Heart right ventricle (tissue), 16 donors: ENCODE measurements at regions of chr3 and their contacts with region 1.

Region 1: DNA sequence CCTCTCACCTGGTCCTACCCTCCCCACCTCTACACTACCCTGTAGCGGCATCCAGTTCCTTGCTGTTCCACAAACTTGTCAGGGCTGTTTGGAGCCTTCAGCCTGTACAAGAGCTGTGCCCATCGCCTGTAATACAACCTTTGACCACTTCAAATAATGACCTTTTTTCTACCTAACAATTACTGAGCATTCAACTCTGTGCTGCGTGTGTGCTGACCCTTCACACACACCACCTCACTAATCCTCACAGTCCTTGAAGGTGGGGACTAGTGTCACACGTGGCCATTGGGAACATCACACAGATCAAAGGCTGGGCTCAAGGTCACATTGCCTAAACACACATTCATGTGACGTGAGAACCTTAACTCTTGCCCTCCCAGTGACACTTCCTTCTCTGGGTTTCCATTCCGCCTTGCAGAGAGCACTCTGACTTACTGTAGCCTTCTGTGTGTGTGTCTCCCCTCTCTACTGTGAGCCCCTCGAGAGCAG is 3.1 kb downstream of the C3orf20 start:
- DNase-seq: no peak
- ATAC-seq: no peak
- H3K4me3 ChIP-seq: no peak overlapping the region
- H3K27ac ChIP-seq: no peak overlapping the region
- H3K4me1 ChIP-seq: no peaks in the 10 kb centered on the region
- H3K27me3 ChIP-seq: no peaks in the 10 kb centered on the region
- CTCF ChIP-seq: no peak

Region 2: DNA sequence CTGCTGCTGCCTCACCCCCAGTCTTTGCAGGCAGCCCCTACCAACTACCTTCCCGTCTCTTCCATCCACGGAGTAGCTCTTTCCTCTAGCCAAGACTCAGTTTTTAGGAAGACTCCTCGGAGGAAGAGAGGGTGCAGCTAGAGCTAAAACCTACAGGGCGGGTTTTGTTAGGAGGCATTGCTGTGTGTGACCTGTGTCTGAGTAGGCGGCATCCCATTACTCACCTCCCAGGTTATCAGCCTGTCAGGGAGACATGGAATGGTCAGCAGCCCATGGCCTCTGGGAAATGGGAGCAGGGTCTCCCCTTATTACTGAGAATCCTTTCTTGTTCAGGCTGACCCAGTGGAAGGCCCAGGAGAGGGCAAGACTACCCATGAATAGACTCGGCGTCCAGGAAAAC is 97.0 kb after region 1 on chr3:
- intact Hi-C with region 1: loop called in 9 of 10 experiments (anchors 2 to 5 kb)
- DNase-seq: no peak
- ATAC-seq: no peak
- H3K4me3 ChIP-seq: no peak overlapping the region
- H3K27ac ChIP-seq: no peak overlapping the region
- H3K4me1 ChIP-seq: no peaks in the 10 kb centered on the region
- H3K27me3 ChIP-seq: no peaks in the 10 kb centered on the region
- CTCF ChIP-seq: no peak

Region 3: GRCh38 chr3:14780927-14781507 is 103.0 kb after region 1 on chr3:
- intact Hi-C with region 1: loop called (anchors 2 to 5 kb)
- DNase-seq: peak; percentile 46 to 61
- ATAC-seq: peak; percentile 65 to 93 (median 88)
- H3K4me3 ChIP-seq: no peak overlapping the region
- H3K27ac ChIP-seq: no peak overlapping the region
- H3K4me1 ChIP-seq: peaks cover 0 to 18% (median 0%) of the 10 kb centered on the region in 9 donors
- H3K27me3 ChIP-seq: peaks cover 0 to 13% (median 0%) of the 10 kb centered on the region in 7 donors
- CTCF ChIP-seq: peak; percentile 39 to 82 (median 70)

Region 4: GRCh38 chr3:14791343-14791945 is 113.4 kb after region 1 on chr3:
- intact Hi-C with region 1: loop called in 1 of 10 experiments (anchors 5 kb)
- DNase-seq: peak; percentile 66 to 79
- ATAC-seq: peak; percentile 54 to 72 (median 62)
- H3K4me3 ChIP-seq: no peak overlapping the region
- H3K27ac ChIP-seq: peak overlapping the region in 2 of 10 donors; percentile 56 to 65
- H3K4me1 ChIP-seq: peaks cover 14 to 50% (median 35%) of the 10 kb centered on the region in 9 donors
- H3K27me3 ChIP-seq: peaks cover 0 to 26% (median 0%) of the 10 kb centered on the region in 7 donors
- CTCF ChIP-seq: peak; percentile 54 to 83 (median 77)

Region 5: GRCh38 chr3:14915636-14916222 is 237.7 kb after region 1 on chr3:
- intact Hi-C with region 1: loop called in 9 of 10 experiments (anchors 2 to 5 kb)
- DNase-seq: no peak
- ATAC-seq: peak in 3 of 8 donors; percentile 10 to 34 (median 17)
- H3K4me3 ChIP-seq: no peak overlapping the region
- H3K27ac ChIP-seq: no peak overlapping the region
- H3K4me1 ChIP-seq: peaks cover 0 to 10% (median 2%) of the 10 kb centered on the region in 9 donors
- H3K27me3 ChIP-seq: peaks cover 0 to 4% (median 0%) of the 10 kb centered on the region in 7 donors
- CTCF ChIP-seq: peak in 5 of 9 donors; percentile 20 to 34 (median 25)